Right lobe of liver (tissue), 6 donors: ENCODE measurements at regions of chr19 and their contacts with region 1.

Region 1: DNA sequence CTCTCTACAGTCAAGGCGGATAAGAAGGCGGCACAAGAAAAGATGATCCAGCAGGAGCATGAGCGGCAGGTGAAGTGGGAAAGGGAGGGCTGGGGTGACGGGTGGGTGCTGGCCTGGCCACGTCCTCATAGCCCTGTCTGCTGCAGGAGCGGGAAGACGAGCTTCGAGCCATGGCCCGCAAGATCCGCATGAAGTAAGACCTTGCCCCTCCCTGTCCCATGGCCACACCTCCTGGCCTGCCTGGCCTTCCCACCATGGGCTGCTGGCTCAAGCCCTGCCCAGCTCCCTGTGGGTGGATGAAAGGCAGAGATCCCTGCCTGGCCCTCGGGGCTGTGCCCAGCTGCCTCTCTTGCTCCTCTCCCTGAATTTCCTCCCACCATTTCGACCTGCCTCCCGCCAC is 7.2 kb downstream of the ZNF296 start:
- DNase-seq: no peak
- ATAC-seq: peak; percentile 33 to 64 (median 44)
- H3K4me3 ChIP-seq: no peak overlapping the region
- H3K27ac ChIP-seq: no peak overlapping the region
- H3K4me1 ChIP-seq: no peaks in the 10 kb centered on the region
- H3K27me3 ChIP-seq: no peaks in the 10 kb centered on the region
- CTCF ChIP-seq: no peak
- POLR2A ChIP-seq: no peak

Region 2: DNA sequence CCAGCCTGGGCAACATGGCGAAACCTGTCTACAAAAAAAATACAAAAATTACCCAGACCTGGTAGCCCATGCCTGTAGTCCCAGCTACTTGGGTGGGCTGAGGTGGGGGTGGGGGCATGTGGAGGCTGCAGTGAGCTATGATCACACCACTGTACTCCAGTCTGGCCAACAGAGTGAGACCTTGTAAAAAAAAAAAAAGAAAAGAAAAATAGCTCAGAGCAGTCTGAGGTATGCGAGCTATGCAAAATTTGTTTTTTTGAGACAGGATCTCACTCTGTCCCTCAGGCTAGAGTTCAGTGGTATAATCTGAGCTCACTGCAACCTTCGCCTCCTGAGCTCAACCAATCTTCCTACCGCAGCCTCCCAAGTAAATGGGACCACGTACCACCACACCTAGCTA is 185.1 kb before region 1 on chr19:
- intact Hi-C with region 1: loop called in 1 of 2 experiments (anchors 10 kb)
- DNase-seq: no peak
- ATAC-seq: no peak
- H3K4me3 ChIP-seq: no peak overlapping the region
- H3K27ac ChIP-seq: no peak overlapping the region
- H3K4me1 ChIP-seq: no peaks in the 10 kb centered on the region
- H3K27me3 ChIP-seq: no peaks in the 10 kb centered on the region
- CTCF ChIP-seq: no peak
- POLR2A ChIP-seq: no peak

Region 3: DNA sequence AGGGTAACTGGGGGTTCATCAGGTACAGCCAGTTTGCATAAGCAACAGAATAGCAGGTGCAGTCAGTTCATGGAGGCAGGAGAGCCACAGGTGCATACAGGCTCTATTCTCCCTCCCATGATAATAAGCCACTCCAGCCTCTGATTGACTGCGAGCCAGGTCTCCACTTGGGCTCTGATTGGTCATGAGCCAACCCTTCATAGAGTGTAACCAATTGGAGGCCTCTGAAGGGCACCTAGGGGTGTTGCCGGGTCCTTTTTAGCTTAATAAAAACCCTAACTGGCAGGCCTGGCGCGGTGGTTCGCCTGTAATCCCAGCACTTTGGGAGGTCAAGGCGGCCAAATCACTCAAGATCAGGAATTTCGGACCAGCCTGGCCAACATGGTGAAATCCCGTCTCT is 262.4 kb after region 1 on chr19:
- intact Hi-C with region 1: no loop called
- DNase-seq: no peak
- ATAC-seq: no peak
- H3K4me3 ChIP-seq: no peak overlapping the region
- H3K27ac ChIP-seq: no peak overlapping the region
- H3K4me1 ChIP-seq: no peaks in the 10 kb centered on the region
- H3K27me3 ChIP-seq: no peaks in the 10 kb centered on the region
- CTCF ChIP-seq: no peak
- POLR2A ChIP-seq: no peak